BJ (cell line): ENCODE measurements at regions of chr12 and their contacts with region 1.

Region 1: DNA sequence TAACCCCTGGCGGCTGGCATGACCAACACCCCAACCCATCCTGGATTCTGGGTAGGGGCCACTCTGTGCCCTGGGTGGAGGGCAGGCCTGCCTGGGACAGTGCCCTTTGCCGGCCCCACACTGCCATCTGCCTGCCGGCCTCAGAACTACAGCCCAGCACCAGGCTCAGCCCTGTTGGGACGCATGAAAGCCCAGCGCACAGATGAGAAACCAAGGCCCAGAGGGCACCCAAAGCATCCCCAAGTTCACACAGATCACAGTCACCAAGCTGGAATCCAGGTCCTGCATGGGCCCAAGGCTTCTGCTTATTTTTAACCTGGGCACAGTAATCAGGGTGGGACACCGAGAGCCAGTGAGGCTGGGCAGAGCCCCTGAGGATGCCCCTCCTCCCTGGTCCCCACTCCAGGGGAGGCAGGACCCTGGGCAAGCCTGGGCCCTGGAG is 26.2 kb downstream of the RFLNA start:
- DNase-seq: no peak
- H3K4me3 ChIP-seq: no peak overlapping the region
- H3K27me3 ChIP-seq: no peaks in the 10 kb centered on the region; the same call in 1 of the 2 replicates
- CTCF ChIP-seq: peak; percentile 96

Region 2: DNA sequence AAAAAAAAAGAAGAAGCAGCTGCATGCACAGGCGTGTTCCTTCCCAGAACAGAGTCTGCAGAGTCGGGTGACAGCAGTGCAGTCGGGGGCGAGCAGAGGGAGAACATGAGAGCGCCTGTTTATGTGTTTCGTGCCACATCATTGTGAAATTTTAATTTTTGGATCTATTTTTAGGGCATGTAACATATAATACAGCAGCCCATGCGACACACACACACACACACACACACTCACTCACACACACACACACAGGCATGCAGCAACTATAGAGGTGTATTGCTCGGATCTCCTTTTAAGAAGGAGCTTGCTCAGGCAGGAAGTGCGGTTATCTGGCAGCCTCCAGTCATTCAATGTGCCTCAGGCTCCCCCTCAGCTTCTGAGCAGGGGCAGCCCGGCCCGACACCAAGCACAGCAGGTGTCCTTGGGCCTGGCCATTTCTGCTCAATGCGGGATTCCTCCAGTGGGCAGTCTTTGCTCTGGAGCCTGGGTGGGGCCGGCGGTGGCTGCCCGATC is 276.2 kb before region 1 on chr12:
- CTCF ChIA-PET with region 1: interaction called, 14 read pairs
- POLR2A ChIA-PET with region 1: no interaction called
- DNase-seq: no peak
- H3K4me3 ChIP-seq: no peak overlapping the region
- H3K27me3 ChIP-seq: peaks cover 1% of the 10 kb centered on the region
- CTCF ChIP-seq: no peak

Region 3: DNA sequence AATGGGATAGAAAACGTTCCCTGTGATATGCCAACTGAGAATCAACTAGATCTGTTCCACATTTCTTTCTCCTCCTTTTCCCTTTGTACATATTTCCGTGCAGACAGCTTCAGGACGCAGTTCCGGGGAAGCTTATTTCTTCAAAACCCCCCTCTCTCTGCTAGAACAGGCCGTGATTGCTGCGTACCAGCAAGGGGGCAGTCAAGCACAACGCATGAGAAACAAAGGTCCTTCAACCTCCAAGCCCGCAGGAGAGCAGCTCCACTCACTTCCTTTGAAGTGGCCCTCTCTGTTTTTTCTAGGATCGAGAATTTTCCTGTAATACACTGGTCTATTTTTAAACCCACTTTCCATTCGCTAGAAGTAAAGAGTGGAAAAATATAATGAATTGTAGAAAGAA is 267.2 kb before region 1 on chr12:
- CTCF ChIA-PET with region 1: interaction called, 57 read pairs
- POLR2A ChIA-PET with region 1: no interaction called
- DNase-seq: no peak
- H3K4me3 ChIP-seq: no peak overlapping the region
- H3K27me3 ChIP-seq: no peaks in the 10 kb centered on the region; the same call in 1 of the 2 replicates
- CTCF ChIP-seq: peak; percentile 83

Region 4: DNA sequence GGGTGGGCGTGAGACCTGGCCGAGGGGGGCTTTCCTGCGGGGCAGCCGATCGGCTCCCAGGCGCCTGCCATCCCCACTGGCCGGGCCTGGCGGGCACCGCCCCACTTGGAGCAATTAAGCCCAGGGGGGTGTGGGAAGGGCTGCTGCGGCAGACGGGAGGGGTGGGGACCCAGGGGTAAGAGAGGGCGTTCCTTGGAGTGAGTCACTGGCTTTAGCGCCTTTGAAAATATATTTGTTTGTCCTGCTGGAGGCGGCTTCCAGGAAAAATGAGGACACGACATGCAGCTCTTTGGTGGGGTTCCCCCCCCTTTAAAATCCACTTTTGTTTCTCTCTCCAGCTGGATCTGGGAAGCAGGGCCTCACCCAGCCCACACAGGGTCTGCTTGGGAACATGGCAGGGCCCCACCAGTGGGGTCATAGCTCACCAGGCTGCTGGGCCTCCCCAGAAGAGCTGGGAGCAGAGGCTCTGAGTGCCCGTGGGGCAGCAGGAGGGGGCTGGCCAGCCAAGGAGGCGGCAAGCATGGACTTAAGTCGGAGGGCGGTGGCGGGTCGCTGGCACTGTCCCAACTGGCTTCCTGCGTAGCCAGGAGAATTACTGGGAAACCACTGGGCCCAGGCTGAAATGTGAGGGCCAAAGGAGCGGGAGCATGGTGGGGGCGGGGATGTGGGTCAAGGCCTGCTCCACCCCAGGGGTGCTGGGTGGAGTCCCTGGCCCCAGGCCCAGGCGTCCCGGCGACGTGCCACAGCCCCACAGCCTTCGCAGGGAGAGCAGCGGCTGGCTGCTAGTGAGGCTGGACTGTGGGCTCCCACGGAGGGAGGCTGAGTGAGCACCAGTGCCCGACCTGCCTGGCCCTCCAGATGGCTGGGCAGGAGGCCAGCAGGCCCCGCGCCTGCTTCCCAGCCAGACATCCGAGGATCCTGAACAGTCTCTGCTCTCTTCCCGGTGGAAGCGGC is 101.8 kb after region 1 on chr12:
- CTCF ChIA-PET with region 1: no interaction called
- POLR2A ChIA-PET with region 1: no interaction called
- DNase-seq: peak; percentile 87
- H3K4me3 ChIP-seq: peak overlapping the region; percentile 25
- H3K27me3 ChIP-seq: no peaks in the 10 kb centered on the region
- CTCF ChIP-seq: no peak